Activated CD4-positive, alpha-beta T cell treated with anti-CD3 and anti-CD28 coated beads for 36 hours (primary cell): ENCODE measurements at regions of chr16 and their contacts with region 1.

Region 1: DNA sequence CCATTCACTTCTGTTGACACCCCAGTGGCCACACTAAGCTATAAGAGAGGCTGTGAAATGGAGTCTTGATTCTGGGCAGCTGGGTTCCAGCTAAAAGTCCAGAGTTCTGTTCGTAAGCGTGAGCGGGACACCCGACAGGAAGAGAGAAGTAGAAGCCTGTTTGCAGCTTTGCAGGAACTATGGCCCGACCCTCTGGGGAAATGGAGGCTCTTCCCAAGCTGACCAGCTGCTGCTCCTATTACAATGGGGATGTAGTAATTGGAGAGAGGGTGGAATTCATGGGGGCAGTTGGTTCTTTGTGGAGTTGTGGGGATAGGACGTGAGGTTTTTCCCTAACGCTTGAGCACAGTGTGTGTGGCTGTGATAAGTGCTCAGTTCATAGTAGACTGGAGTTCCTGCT is 28.4 kb downstream of the UBALD1 start:
- DNase-seq: no peak
- ATAC-seq: no peak
- H3K4me3 Mint-ChIP-seq: no peak overlapping the region
- H3K27ac Mint-ChIP-seq: no peak overlapping the region
- H3K4me1 Mint-ChIP-seq: peaks cover 3% of the 10 kb centered on the region
- H3K27me3 Mint-ChIP-seq: peaks cover 3% of the 10 kb centered on the region

Region 2: DNA sequence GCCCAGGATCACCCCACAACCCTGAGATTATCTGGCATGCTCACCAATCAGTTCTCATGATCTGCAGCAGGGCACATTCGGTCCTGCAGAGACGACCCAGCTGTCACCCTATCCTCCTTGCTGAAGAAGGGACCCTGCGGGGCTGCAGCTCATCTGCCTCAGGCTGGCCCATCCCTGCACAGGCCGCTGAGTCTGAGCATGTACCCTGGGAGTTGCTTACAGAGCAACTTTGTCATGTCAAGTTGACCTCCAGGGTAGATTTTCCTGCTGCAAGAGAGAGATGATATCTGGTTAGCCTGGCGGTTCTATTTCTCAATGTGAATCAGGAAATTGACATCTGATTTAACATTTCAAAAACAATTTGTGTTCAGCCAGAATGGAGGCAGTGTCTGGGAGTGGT is 434.0 kb before region 1 on chr16:
- CTCF ChIA-PET with region 1: no interaction called
- POLR2A ChIA-PET with region 1: no interaction called
- intact Hi-C with region 1: no loop called
- DNase-seq: no peak
- ATAC-seq: no peak
- H3K4me3 Mint-ChIP-seq: no peak overlapping the region
- H3K27ac Mint-ChIP-seq: no peak overlapping the region
- H3K4me1 Mint-ChIP-seq: no peaks in the 10 kb centered on the region
- H3K27me3 Mint-ChIP-seq: no peaks in the 10 kb centered on the region

Region 3: GRCh38 chr16:4442371-4442770 is 143.9 kb before region 1 on chr16:
- CTCF ChIA-PET with region 1: no interaction called
- POLR2A ChIA-PET with region 1: no interaction called
- intact Hi-C with region 1: no loop called
- DNase-seq: no peak
- ATAC-seq: no peak
- H3K4me3 Mint-ChIP-seq: no peak overlapping the region
- H3K27ac Mint-ChIP-seq: no peak overlapping the region
- H3K4me1 Mint-ChIP-seq: no peaks in the 10 kb centered on the region
- H3K27me3 Mint-ChIP-seq: no peaks in the 10 kb centered on the region

Region 4: DNA sequence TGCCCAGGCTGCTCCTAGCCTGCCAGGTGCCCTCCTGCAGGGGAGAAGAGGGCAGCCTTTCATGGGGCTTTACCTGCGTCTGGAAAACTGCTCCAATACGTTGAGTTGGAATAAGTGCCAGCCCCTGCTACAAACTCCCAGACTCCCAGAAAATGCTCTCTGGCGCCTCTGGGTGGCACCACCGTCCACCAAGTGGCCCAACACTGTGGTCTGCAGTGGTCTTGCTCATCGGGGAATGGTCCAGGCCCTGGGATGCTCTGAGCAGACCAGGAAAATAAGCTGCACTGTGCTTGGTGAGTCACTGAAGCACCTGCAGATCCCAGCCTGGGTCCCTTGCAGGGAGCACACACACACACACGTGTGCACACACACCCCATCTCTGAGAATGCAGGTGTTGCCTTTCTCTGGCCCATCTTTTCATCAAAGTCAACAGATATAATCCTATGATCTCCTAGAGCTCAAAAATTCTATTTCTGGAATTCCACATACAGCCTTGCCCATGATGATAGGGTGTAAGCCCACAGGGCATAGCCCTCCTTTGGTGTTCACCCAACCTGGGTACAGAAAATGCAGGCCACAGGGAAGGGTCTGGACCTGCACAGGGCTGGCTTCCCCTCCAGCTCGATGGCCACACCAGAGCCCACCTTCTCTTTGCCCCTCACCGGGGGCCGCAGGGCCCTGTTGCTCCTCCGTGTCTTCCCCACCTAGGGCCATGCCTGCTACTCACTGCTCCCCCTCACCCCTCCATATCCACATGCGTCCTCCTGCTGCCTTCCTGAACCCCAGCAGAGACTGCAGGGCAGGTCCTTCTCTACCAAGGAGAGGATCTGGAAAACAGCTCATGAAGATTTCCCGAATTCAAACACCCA is 68.2 kb before region 1 on chr16:
- CTCF ChIA-PET with region 1: interaction called, 11 read pairs
- POLR2A ChIA-PET with region 1: no interaction called
- intact Hi-C with region 1: loop called in 1 of 2 experiments (anchors 2 kb)
- DNase-seq: peak; percentile 38
- ATAC-seq: no peak
- H3K4me3 Mint-ChIP-seq: no peak overlapping the region
- H3K27ac Mint-ChIP-seq: peak overlapping the region; percentile 47
- H3K4me1 Mint-ChIP-seq: peaks cover 39% of the 10 kb centered on the region
- H3K27me3 Mint-ChIP-seq: no peaks in the 10 kb centered on the region

Region 5: DNA sequence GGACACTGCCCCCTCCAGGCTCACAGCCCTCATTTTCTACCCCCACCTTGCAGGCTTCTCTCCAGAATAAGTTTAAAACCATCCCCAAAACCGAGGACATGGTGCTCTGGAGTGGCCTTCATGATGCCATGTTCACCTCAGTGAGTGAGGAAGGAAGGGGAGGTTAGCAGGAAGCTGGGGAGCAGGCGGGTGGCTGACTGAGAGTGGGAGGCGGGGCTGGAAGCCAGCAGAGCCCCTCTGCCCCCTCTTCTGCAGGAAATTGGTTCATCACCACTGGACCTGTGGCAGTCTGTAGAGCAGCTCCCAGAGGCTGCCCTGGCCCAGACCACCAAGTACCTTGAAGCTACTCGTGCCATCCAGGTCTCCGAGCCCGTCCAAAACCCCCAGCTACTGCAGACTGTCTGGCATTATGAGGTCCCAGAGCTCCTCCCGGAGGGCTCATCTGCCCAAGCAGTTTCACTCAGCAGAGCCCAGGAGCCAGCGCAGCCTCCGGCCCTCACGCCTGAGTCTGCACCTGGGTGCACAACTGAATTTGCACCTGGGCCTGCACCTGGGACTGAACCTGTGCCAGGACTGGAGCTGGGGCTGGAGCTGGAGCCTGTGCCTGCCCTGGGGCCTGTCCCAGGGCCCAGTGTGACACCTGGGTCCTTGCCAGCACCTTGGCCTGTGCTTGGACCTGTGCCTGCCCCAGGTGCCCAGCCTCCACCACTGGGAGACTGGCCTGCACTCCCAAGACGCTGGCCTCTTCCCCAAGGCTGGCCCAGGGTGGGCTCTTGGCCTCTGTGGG is 11.2 kb before region 1 on chr16:
- CTCF ChIA-PET with region 1: interaction called, 10 read pairs
- POLR2A ChIA-PET with region 1: no interaction called
- intact Hi-C with region 1: no loop called
- DNase-seq: no peak
- ATAC-seq: no peak
- H3K4me3 Mint-ChIP-seq: no peak overlapping the region
- H3K27ac Mint-ChIP-seq: no peak overlapping the region
- H3K4me1 Mint-ChIP-seq: no peaks in the 10 kb centered on the region
- H3K27me3 Mint-ChIP-seq: no peaks in the 10 kb centered on the region

Region 6: DNA sequence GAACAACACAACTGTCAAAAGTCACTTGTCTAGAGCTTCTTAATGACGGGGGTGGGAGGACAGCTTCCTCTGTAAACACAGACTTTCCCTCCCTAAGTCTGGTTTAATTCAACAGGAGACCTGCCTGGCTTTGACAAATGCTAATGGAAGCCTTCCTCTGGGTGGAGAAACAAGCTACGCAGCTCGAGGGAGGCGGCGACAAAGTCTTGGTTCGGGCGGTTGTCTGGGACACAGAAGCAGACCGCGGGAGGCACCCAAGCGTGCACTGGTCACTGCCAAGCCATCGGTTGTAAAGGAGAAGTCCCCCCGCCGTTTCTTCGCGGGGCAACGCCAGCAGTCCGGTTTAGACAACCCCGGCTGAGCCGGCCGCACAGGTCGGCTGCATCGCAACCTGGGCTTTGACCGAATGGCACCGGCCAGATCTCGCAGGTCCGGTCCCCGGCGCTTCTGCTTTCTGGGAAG is 260.2 kb after region 1 on chr16:
- CTCF ChIA-PET with region 1: no interaction called
- POLR2A ChIA-PET with region 1: no interaction called
- intact Hi-C with region 1: no loop called
- DNase-seq: peak; percentile 48
- ATAC-seq: no peak
- H3K4me3 Mint-ChIP-seq: peak overlapping the region; percentile 77
- H3K27ac Mint-ChIP-seq: peak overlapping the region; percentile 84
- H3K4me1 Mint-ChIP-seq: peaks cover 49% of the 10 kb centered on the region
- H3K27me3 Mint-ChIP-seq: no peaks in the 10 kb centered on the region